ENCODE measurements at regions of chr20 and their contacts with region 1.

Region 1: GRCh38 chr20:36085686-36086267 is 68.8 kb upstream of the EPB41L1 start:
- DNase-seq: peak; percentile 97
- H3K27ac ChIP-seq: peak overlapping the region; percentile 87
- CTCF ChIP-seq: no peak

Region 2: GRCh38 chr20:36050436-36051317 is 35.1 kb before region 1 on chr20:
- CTCF ChIA-PET with region 1: no interaction called
- POLR2A ChIA-PET with region 1: interaction called, 11 read pairs
- DNase-seq: peak; percentile 98
- H3K27ac ChIP-seq: peak overlapping the region; percentile 91
- CTCF ChIP-seq: no peak

Region 3: DNA sequence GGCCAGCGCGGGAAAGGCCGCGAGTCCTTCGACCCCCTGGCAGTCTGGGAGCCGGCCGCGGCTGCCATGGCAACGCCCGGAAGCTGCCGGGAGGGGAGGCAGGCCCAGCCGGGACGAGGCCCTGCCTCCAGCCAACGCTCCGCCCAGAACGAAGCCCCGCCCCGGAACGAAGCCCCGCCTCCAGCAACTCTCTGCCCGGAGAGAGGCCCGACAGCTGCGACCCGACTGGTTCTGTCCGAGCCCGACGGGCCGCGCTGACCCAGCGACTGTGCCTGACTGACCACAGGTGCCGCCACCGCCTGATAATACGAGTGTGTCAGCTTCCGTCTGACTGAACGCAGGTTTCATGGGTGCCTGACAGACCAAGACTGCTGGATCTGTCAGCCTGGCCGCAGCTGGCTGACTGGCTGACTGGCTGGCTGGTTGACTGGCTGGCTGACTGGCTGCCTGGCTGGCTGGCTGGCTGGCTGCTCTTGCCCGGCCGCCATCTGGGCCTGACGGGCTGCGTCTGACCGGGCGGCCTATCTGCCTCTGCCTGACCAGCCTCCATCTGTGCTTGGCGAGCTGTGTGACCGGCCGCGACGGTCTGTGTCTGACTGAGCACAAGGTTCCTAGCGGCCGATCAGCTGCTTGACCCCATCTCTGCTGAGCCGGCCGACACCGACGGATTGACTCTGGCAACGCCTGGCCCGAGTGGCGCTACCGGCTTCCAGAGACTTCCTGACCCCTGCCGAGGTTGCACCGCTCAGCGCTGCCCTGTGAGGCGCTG is 20.9 kb before region 1 on chr20:
- CTCF ChIA-PET with region 1: no interaction called
- POLR2A ChIA-PET with region 1: interaction called, 12 read pairs
- DNase-seq: peak; percentile 98
- H3K27ac ChIP-seq: peak overlapping the region; percentile 75
- CTCF ChIP-seq: no peak

Region 4: GRCh38 chr20:36268440-36269342 is 182.9 kb after region 1 on chr20:
- CTCF ChIA-PET with region 1: no interaction called
- POLR2A ChIA-PET with region 1: no interaction called
- DNase-seq: no peak
- H3K27ac ChIP-seq: no peak overlapping the region
- CTCF ChIP-seq: no peak

Measured in RWPE1 (cell line).